AG04449 (cell line): ENCODE measurements at regions of chr10 and their contacts with region 1.

Region 1: GRCh38 chr10:71771821-71772617 is 1.3 kb downstream of the VSIR start:
- DNase-seq: no peak
- H3K4me3 ChIP-seq: peak overlapping the region; percentile 70
- CTCF ChIP-seq: no peak

Region 2: DNA sequence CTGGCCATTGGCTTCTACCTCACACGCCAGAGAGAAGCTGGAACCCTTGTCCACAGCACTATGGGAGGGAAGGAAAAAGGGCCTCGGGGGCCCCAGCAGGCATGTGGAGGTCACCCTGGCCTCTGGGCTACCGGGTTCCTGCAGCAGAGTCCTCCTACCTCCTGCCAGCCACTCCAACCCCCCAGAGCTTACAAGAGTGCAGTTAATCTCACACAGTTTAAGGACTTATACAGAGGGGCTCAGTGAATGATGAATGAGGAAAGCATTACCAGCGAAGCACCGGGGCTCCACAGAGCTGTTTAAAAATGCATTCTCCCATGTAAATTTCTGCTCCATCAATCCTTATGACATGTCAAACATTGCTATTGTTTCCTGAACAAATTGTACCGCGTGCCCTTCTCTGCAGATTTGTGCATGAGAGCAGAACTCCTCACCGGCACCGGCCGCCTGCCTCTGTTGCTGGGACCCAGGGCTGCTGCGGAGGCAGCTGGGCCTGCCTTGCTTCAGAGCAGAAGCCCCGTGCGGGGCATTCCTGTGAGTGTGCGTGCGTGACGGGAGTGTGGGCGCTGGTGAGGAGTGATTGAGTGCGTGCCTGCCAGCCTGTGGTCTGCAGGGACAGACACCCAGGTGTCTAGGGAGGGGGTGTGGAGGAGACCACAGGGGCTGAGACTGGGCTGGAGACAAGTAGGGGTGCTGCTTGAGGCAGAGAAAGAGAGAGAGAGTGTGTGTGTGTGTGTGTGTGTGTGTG is 105.2 kb before region 1 on chr10:
- CTCF ChIA-PET with region 1: no interaction called
- POLR2A ChIA-PET with region 1: no interaction called
- DNase-seq: no peak
- H3K4me3 ChIP-seq: no peak overlapping the region
- CTCF ChIP-seq: no peak

Region 3: DNA sequence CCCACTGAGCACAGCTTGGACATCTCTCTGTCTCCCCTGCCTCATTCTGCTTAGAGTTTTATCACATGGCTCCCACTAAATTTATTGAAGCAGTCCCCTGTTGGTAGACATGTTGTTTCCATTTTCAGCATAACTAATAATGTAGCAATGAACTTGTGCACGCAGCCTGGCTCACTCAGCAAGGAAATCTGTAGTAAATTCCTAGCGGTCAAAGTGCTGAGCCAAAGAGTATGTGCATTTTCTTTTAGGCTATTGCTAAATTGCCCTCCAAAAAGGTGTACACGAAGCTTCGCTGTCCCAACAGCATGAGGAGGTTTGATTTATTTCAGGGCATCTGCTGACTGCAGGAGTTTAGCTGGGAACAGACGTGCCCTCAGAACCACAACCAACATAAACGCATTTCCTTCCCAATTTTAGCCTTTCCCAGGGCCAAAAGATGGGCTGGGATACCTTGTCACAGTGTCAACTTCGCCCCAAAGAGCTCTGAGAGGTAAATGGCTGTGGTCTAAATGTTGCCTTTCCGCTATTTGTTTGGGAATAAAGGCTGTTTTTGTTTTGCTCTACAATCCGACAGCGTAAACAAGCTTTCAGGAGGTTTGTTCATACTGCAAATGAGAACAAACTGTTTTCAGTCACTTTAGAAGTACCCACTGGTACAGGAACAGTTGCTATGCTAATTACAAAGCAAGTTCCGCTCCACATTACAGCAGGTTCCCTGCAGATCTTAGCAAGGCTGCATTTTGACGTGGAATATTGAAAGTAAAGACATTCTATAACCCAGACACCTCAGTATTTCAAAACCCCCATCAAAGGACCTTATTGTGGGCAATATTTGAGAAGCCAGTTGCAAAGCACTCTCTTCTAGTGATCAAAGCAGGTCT is 15.5 kb before region 1 on chr10:
- CTCF ChIA-PET with region 1: interaction called, 34 read pairs
- POLR2A ChIA-PET with region 1: interaction called, 5 read pairs
- DNase-seq: no peak
- H3K4me3 ChIP-seq: no peak overlapping the region
- CTCF ChIP-seq: no peak

Region 4: DNA sequence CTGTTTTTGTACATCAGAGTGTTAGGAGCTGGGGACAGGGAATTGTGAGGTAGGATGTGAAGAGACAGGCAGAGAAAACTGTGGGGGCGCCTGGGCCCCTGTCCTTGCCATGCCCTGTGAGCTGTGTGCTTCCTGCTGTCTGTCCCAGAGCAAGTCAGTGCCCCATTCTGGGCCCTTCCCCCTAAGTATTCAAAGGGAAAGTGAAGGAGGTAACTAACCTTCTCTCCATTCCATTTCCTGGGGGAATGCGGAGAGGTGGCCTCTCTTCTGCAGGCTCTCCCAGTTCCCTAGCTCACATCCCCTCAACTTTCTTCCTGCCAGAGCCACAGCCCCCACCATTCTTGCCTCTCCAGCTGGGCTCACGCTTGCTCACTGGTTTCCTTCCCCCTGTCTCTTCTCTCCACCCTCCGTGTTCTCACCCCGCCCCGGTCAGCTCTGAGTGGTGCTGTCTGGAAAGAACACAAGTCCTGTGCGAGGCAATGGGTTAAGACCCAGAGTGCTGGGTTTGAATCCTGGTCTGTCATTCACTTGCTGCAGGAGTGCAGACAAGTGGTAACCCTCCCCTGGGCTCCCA is 11.0 kb after region 1 on chr10:
- CTCF ChIA-PET with region 1: interaction called, 31 read pairs
- POLR2A ChIA-PET with region 1: no interaction called
- DNase-seq: no peak
- H3K4me3 ChIP-seq: no peak overlapping the region
- CTCF ChIP-seq: no peak